ENCODE measurements at regions of chr6 and their contacts with region 1.

Region 1: DNA sequence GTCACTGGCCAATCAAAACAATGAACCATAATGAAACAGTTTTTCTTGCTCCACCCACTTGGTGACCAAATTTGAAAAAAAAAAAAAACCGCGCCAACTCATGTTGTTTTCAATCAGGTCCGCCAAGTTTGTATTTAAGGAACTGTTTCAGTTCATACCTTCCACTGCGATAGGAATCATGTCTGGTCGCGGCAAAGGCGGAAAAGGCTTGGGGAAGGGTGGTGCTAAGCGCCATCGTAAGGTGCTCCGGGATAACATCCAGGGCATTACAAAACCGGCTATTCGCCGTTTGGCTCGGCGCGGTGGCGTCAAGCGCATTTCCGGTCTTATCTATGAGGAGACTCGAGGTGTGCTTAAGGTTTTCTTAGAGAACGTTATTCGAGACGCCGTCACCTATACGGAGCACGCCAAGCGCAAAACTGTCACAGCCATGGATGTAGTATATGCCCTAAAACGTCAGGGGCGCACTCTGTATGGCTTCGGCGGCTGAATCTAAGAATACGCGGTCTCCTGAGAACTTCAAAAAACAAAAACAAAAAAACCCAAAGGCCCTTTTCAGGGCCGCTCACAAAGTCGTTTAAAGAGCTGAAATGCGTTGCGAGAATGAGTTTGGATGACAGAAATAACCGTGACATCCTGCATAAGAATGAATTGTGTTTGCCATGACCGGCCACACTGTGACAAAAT is 16.7 kb downstream of the HFE start:
- DNase-seq: peak; percentile 95
- H3K4me3 ChIP-seq: peak overlapping the region; percentile 45 to 47 (median 47)
- H3K27ac ChIP-seq: peak overlapping the region; percentile 93
- H3K4me1 ChIP-seq: peaks cover 8% of the 10 kb centered on the region
- H3K27me3 ChIP-seq: no peaks in the 10 kb centered on the region
- CTCF ChIP-seq: peak; percentile 33 to 45

Region 2: GRCh38 chr6:26054857-26055669 is 48.9 kb before region 1 on chr6:
- CTCF ChIA-PET with region 1: no interaction called
- dilution Hi-C with region 1: loop called (anchors 5 kb)
- in situ Hi-C with region 1: no loop called
- intact Hi-C with region 1: loop called (anchors 2 kb)
- DNase-seq: peak; percentile 92
- H3K4me3 ChIP-seq: peak overlapping the region; percentile 61 to 82 (median 62)
- H3K27ac ChIP-seq: peak overlapping the region; percentile 91
- H3K4me1 ChIP-seq: peaks cover 9% of the 10 kb centered on the region
- H3K27me3 ChIP-seq: no peaks in the 10 kb centered on the region
- CTCF ChIP-seq: peak in 1 of 2 donors; percentile 19

Region 3: DNA sequence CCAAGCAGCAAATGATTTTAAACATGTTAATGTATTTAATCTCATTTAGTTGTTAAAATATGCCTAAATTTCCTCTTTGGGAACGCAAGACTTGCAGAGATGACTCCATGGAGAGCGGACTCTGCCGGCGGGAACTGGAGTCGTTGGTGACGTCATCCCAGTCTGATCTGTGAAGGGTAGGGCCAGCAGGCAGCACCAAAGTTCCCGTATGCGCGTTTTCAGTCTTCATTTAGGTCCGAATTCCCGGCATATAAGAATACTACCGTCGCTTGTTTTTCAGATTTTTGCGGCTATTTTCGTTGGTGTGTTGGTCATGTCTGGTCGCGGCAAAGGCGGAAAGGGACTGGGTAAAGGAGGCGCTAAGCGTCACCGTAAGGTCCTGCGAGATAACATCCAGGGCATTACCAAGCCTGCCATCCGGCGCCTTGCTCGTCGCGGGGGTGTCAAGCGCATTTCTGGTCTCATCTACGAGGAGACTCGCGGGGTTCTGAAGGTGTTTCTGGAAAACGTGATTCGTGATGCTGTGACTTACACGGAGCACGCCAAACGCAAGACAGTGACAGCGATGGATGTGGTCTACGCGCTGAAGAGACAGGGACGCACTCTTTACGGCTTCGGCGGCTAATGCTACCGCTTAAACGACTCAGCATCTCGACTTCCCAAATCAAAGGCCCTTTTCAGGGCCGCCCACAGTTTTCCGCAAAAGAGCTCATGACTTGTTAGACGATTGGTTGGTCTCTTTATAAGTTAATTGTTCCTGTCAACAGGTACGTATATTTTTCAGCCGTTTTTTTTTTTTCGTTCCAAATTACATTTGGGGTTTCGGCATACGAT is 100.6 kb after region 1 on chr6:
- CTCF ChIA-PET with region 1: interaction called, 8 read pairs
- dilution Hi-C with region 1: no loop called
- in situ Hi-C with region 1: no loop called
- intact Hi-C with region 1: loop called (anchors 1 kb)
- DNase-seq: peak; percentile 95
- H3K4me3 ChIP-seq: peak overlapping the region; percentile 67 to 73 (median 71)
- H3K27ac ChIP-seq: peak overlapping the region; percentile 97
- H3K4me1 ChIP-seq: peaks cover 19% of the 10 kb centered on the region
- H3K27me3 ChIP-seq: no peaks in the 10 kb centered on the region
- CTCF ChIP-seq: peak; percentile 11 to 36